ENCODE measurements at regions of chr3 and their contacts with region 1.

Region 1: DNA sequence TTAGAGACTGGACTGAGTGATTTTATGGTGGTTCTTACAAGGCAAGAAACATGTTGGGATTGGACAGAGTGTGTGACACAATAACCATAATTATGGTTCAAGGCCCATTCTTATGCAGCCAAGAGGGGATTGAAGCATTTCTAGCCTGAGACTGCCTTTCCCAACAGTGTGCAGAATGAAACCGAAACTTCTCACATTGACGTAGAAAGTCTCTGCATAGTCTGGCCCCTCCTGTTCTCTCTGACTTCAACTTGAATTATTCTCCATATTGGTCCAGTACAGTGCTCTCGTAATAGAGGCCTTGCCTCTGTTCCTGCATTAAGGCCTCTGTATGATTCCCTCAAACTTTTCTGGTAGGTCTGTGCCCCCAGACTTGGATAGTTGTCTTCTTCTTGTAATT is 138.3 kb downstream of the DIPK2A start:
- DNase-seq: no peak
- H3K4me3 ChIP-seq: peak overlapping the region in 7 of 59 donors; percentile 2 to 35 (median 13)
- H3K27ac ChIP-seq: peak overlapping the region in 4 of 59 donors; percentile 3 to 75 (median 8)
- H3K27me3 ChIP-seq: no peaks in the 10 kb centered on the region
- CTCF ChIP-seq: no peak

Region 2: DNA sequence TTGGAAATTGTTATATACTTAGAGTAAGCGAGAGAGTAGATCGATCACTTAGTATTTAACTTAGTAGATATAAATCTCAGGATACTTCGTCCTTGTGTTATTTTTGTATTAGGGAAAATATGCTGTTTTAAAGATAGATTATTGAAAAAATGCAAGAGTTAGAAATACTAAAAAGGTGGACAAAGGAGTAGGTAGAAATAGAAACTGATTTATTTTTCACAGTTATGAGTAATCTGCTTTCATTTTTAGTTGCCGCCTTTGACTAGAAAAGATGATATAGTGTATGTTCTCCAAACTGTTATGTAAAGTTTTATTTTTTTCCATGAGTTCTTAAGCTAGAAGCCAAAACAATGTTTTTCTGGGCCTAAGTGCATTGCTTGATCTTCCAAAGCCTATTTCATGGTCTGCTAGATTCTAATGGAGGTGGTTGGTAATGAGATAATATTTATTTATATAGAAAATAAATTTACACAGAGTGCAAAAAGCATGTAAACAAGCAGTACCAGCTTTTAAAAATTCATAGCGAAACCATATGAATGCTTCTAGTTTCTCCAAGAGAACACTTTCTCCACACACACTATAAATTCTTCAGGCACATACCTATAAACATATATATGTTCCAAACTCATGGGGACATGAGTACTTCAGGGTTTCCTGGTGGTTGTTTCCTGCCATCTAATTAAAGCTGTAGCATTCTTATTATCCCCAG is 77.3 kb before region 1 on chr3:
- intact Hi-C with region 1: loop called (anchors 1 to 10 kb)
- DNase-seq: no peak
- H3K4me3 ChIP-seq: peak overlapping the region in 23 of 59 donors; percentile 0 to 49 (median 18)
- H3K27ac ChIP-seq: peak overlapping the region; percentile 63 to 99 (median 95)
- H3K27me3 ChIP-seq: no peaks in the 10 kb centered on the region
- CTCF ChIP-seq: no peak

Region 3: DNA sequence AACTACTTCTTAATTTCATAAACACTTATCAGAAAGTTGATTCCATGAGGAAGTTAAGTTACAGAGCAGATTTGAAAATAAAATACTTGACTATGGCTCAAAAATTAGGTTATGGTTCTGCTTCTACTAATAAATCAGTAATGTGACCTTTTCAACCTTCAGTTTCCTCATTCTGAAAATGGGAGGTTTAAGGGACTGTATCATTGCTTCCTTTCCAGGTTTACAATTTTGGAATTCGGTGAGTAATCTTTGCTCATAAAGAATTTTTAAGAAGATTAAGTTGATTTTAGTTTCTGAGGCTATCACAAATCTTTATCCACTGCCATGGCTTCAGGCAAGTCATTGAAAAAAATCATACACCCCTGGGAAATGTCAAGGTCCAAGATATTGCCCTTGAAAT is 922.8 kb after region 1 on chr3:
- intact Hi-C with region 1: no loop called
- DNase-seq: no peak
- H3K4me3 ChIP-seq: no peak overlapping the region
- H3K27ac ChIP-seq: no peak overlapping the region
- H3K27me3 ChIP-seq: no peaks in the 10 kb centered on the region
- CTCF ChIP-seq: no peak

Measured in dorsolateral prefrontal cortex (tissue), 120 donors.